Heart left ventricle (tissue), 16 donors: ENCODE measurements at regions of chr9 and their contacts with region 1.

Region 1: GRCh38 chr9:109012876-109013678 is at the start of gene CTNNAL1:
- DNase-seq: peak; percentile 95 to 97 (median 96)
- ATAC-seq: peak; percentile 95 to 98 (median 97)
- H3K4me3 ChIP-seq: peak within 1 kb of the TSS; percentile 56 to 99 (median 86)
- H3K27ac ChIP-seq: peak within 1 kb of the TSS; percentile 81 to 98 (median 94)
- H3K4me1 ChIP-seq: peaks cover 0 to 61% (median 32%) of the 10 kb centered on the region in 12 donors
- H3K27me3 ChIP-seq: no peaks in the 10 kb centered on the region
- CTCF ChIP-seq: peak in 1 of 12 donors; percentile 3
- POLR2A ChIP-seq: peak; percentile 62 to 97
- total RNA-seq, gene CTNNAL1: 51.2 to 76.3 (median 62.7) TPM

Region 2: DNA sequence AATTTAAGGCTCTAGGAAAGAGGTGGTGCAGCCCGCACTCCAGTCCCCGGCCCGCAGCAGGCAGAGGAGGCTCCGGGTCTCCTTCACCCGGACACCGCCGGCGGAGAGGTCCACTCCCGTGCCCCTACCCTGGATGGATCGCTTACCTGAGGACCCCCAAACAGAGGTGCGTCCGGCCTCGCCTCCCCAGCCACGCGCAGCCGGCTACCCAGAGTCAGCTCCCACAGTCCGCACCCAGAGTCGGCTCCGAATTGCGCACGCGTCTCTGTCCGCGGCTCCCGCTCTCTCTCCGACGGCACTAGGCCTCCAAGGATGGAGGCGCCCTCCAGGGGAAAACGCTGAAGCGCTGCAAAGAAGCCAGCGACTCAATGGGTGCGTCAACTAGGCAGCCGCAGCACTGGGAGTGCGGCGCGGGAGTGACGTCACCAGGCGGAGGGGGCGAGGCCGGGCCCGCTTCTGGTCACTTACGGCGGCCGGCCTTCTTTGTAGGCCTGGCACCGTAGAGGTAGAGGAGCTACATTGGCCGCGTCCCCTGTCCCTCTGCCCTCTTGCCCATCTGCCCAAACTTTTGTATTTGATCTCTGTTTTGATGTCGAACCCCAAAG is 79.3 kb before region 1 on chr9 and contains the start of gene ELP1:
- intact Hi-C with region 1: loop called in 1 of 10 experiments (anchors 5 kb)
- DNase-seq: peak; percentile 93 to 96 (median 96)
- ATAC-seq: peak; percentile 88 to 95 (median 94)
- H3K4me3 ChIP-seq: peak within 1 kb of the TSS; percentile 67 to 99 (median 90)
- H3K27ac ChIP-seq: peak within 1 kb of the TSS; percentile 77 to 96 (median 90)
- H3K4me1 ChIP-seq: peaks cover 0 to 30% (median 19%) of the 10 kb centered on the region in 12 donors
- H3K27me3 ChIP-seq: no peaks in the 10 kb centered on the region
- CTCF ChIP-seq: peak in 8 of 12 donors; percentile 10 to 47 (median 21)
- POLR2A ChIP-seq: no peak
- total RNA-seq, gene ELP1: 12.4 to 32.0 (median 21.1) TPM

Region 3: DNA sequence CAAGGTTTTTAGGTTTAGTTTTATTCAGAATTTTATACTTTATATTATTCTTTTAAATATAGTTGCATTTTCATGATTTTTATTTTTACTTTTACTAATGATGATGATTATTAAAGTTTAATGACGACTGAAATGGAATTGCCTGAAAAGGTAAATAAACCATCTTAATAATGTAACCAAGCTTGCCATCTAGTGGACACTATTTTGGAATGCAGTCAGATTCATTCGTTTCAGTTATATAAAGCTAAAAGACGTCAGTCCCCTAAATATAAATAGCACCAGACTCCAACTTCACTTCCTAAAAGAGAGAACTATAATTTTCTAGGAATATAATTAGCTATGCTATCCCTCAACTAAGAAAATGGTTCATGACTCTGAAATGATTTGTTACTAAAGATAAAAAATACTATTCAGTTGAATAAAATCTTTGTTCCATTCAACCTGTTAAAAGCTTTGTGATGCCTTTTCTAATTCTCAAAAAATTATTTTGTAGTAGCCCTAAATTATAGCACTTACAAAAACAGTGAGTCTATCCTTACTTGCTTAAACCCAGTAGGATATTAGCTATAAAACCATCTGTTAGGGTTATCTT is 59.0 kb before region 1 on chr9:
- intact Hi-C with region 1: loop called in 1 of 10 experiments (anchors 10 kb)
- DNase-seq: no peak
- ATAC-seq: peak in 3 of 4 donors; percentile 65 to 84 (median 70)
- H3K4me3 ChIP-seq: no peak overlapping the region
- H3K27ac ChIP-seq: peak overlapping the region in 10 of 12 donors; percentile 31 to 74 (median 67)
- H3K4me1 ChIP-seq: peaks cover 0 to 24% (median 7%) of the 10 kb centered on the region in 12 donors
- H3K27me3 ChIP-seq: no peaks in the 10 kb centered on the region
- CTCF ChIP-seq: peak; percentile 52 to 83 (median 66)
- POLR2A ChIP-seq: no peak

Region 4: GRCh38 chr9:108963459-108964143 is 49.5 kb before region 1 on chr9:
- intact Hi-C with region 1: loop called in 2 of 10 experiments (anchors 5 to 10 kb)
- DNase-seq: peak in 3 of 5 donors; percentile 31 to 69 (median 40)
- ATAC-seq: peak; percentile 39 to 82 (median 66)
- H3K4me3 ChIP-seq: no peak overlapping the region
- H3K27ac ChIP-seq: peak overlapping the region in 11 of 12 donors; percentile 5 to 72 (median 46)
- H3K4me1 ChIP-seq: peaks cover 0 to 46% (median 19%) of the 10 kb centered on the region in 12 donors
- H3K27me3 ChIP-seq: no peaks in the 10 kb centered on the region
- CTCF ChIP-seq: no peak
- POLR2A ChIP-seq: no peak

Region 5: GRCh38 chr9:108972626-108973209 is 40.4 kb before region 1 on chr9:
- intact Hi-C with region 1: loop called in 2 of 10 experiments (anchors 5 kb)
- DNase-seq: no peak
- ATAC-seq: peak; percentile 31 to 63 (median 56)
- H3K4me3 ChIP-seq: no peak overlapping the region
- H3K27ac ChIP-seq: peak overlapping the region; percentile 40 to 76 (median 64)
- H3K4me1 ChIP-seq: peaks cover 3 to 48% (median 30%) of the 10 kb centered on the region in 12 donors
- H3K27me3 ChIP-seq: no peaks in the 10 kb centered on the region
- CTCF ChIP-seq: no peak
- POLR2A ChIP-seq: no peak

Region 6: DNA sequence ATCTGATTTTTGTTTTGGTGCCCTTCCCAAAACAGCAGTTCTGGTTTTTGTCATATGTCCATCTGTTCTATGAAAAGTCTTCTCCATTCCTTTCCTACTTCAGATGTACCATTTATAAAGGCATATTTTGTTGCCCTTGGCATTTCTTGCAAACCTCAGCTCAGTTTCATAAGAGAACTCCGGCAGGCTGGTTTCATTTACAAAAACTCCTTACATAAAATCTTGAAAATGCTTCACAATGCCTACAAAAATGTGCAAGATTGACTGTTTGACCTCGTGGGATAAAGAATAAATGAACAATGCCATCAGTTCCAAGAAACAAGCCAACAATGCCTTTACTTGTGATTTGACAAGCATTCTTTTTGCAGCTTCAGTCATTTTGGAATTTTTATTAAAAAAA is 39.3 kb after region 1 on chr9:
- intact Hi-C with region 1: loop called in 1 of 10 experiments (anchors 5 kb)
- DNase-seq: no peak
- ATAC-seq: no peak
- H3K4me3 ChIP-seq: no peak overlapping the region
- H3K27ac ChIP-seq: peak overlapping the region in 1 of 12 donors; percentile 12
- H3K4me1 ChIP-seq: peaks cover 0 to 18% (median 0%) of the 10 kb centered on the region in 12 donors
- H3K27me3 ChIP-seq: no peaks in the 10 kb centered on the region
- CTCF ChIP-seq: no peak
- POLR2A ChIP-seq: no peak